Endothelial cell of umbilical vein (primary cell): ENCODE measurements at regions of chr7 and their contacts with region 1.

Region 1: GRCh38 chr7:155003376-155004214 is 671 bp upstream of the PAXIP1 start:
- DNase-seq: peak; percentile 71
- H3K4me3 ChIP-seq: peak overlapping the region; percentile 91 to 94 (median 92)
- H3K27ac ChIP-seq: peak overlapping the region; percentile 87
- H3K4me1 ChIP-seq: peaks cover 11% of the 10 kb centered on the region
- H3K27me3 ChIP-seq: no peaks in the 10 kb centered on the region
- CTCF ChIP-seq: no peak
- POLR2A ChIP-seq: peak; percentile 75

Region 2: GRCh38 chr7:154903083-154903731 is 100.4 kb before region 1 on chr7:
- CTCF ChIA-PET with region 1: no interaction called
- POLR2A ChIA-PET with region 1: no interaction called
- dilution Hi-C with region 1: no loop called
- intact Hi-C with region 1: no loop called
- DNase-seq: no peak
- H3K4me3 ChIP-seq: no peak overlapping the region
- H3K27ac ChIP-seq: no peak overlapping the region
- H3K4me1 ChIP-seq: no peaks in the 10 kb centered on the region
- H3K27me3 ChIP-seq: no peaks in the 10 kb centered on the region
- CTCF ChIP-seq: no peak
- POLR2A ChIP-seq: no peak

Region 3: GRCh38 chr7:154947604-154948003 is 56.0 kb before region 1 on chr7:
- CTCF ChIA-PET with region 1: interaction called, 3 read pairs
- POLR2A ChIA-PET with region 1: no interaction called
- dilution Hi-C with region 1: no loop called
- intact Hi-C with region 1: loop called (anchors 5 kb)
- DNase-seq: no peak
- H3K4me3 ChIP-seq: no peak overlapping the region
- H3K27ac ChIP-seq: no peak overlapping the region
- H3K4me1 ChIP-seq: no peaks in the 10 kb centered on the region
- H3K27me3 ChIP-seq: no peaks in the 10 kb centered on the region
- CTCF ChIP-seq: no peak
- POLR2A ChIP-seq: no peak

Region 4: GRCh38 chr7:155069992-155070751 is 66.6 kb after region 1 on chr7 and contains the start of gene HTR5A:
- CTCF ChIA-PET with region 1: no interaction called
- POLR2A ChIA-PET with region 1: no interaction called
- dilution Hi-C with region 1: no loop called
- intact Hi-C with region 1: loop called (anchors 1 kb)
- DNase-seq: peak; percentile 85
- H3K4me3 ChIP-seq: no peak within 1 kb of the TSS
- H3K27ac ChIP-seq: no peak within 1 kb of the TSS
- H3K4me1 ChIP-seq: no peaks in the 10 kb centered on the region
- H3K27me3 ChIP-seq: no peaks in the 10 kb centered on the region
- CTCF ChIP-seq: no peak
- POLR2A ChIP-seq: no peak
- total RNA-seq, gene HTR5A: not detected in 2 replicates

Region 5: DNA sequence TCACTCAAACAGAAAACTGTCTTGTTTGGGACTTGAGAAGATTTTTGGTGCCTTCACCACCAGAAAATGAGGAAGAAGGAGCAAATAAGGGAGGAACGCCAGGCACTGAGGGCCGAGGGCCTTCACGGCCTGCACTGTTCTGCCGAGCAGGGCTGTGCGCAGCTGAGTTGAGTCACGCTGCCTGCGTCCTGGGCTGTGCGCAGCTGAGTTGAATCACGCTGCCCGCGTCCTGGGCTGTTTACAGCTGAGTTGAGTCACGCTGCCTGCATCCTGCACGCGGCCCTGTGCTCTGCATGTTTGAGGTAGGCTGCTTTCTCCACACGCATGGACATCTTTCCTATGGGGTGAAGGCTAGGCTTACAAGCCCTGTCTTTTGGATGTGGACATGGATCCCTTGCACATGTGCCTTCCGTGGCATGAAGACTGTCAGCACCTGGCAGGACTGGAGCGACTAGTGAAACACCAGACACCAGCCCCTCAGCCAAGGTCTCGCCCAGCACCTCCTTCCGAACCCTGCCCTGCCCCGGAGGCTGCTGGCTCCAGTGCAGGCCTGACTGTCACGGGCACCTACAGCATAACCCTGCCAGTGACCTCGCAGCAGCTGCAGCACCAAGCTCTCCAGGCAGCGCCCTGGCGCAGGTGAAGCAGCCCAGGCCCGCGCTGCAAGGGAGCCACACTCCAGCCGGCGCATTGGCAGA is 163.2 kb after region 1 on chr7:
- CTCF ChIA-PET with region 1: no interaction called
- POLR2A ChIA-PET with region 1: interaction called, 4 read pairs
- dilution Hi-C with region 1: no loop called
- intact Hi-C with region 1: loop called (anchors 1 kb)
- DNase-seq: peak; percentile 84
- H3K4me3 ChIP-seq: no peak overlapping the region
- H3K27ac ChIP-seq: no peak overlapping the region
- H3K4me1 ChIP-seq: no peaks in the 10 kb centered on the region
- H3K27me3 ChIP-seq: no peaks in the 10 kb centered on the region
- CTCF ChIP-seq: no peak
- POLR2A ChIP-seq: no peak

Region 6: GRCh38 chr7:155456738-155457564 is 453.4 kb after region 1 on chr7:
- CTCF ChIA-PET with region 1: no interaction called
- POLR2A ChIA-PET with region 1: no interaction called
- dilution Hi-C with region 1: no loop called
- intact Hi-C with region 1: loop called (anchors 5 kb)
- DNase-seq: peak; percentile 49
- H3K4me3 ChIP-seq: peak overlapping the region in 2 of 3 experiments; percentile 27 to 34
- H3K27ac ChIP-seq: no peak overlapping the region
- H3K4me1 ChIP-seq: no peaks in the 10 kb centered on the region
- H3K27me3 ChIP-seq: peaks cover 78 to 94% of the 10 kb centered on the region in 2 experiments
- CTCF ChIP-seq: no peak
- POLR2A ChIP-seq: no peak